MCF 10A (cell line): ENCODE measurements at regions of chr13 and their contacts with region 1.

Region 1: GRCh38 chr13:25001476-25002206 is 94.3 kb upstream of the PABPC3 start:
- DNase-seq: peak; percentile 53
- H3K4me3 Mint-ChIP-seq: no peak overlapping the region
- H3K27ac Mint-ChIP-seq: peak overlapping the region; percentile 66
- H3K4me1 Mint-ChIP-seq: peaks cover 19% of the 10 kb centered on the region
- H3K27me3 Mint-ChIP-seq: no peaks in the 10 kb centered on the region
- CTCF ChIP-seq: no peak

Region 2: DNA sequence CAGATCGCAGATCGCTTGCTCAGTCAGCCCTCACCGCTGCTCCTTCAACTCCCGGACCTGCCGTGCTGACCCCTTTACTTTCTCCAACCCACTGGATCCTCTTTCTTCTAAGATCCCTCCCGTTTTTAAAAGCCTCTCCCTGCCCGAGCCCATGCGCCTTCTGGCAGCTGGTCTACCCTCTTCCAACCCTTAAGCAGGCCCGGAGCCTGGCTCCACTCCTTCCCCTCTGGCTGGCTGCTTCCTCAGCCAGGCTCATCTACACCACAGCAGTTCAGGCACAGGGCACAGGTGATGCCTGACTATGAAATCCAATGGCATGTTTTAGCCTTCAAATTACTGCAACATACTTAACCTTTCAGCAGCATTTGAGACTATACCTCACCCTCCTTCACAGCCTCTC is 30.5 kb after region 1 on chr13:
- CTCF ChIA-PET with region 1: interaction called, 18 read pairs
- POLR2A ChIA-PET with region 1: no interaction called
- intact Hi-C with region 1: loop called (anchors 1 kb)
- DNase-seq: no peak
- H3K4me3 Mint-ChIP-seq: no peak overlapping the region
- H3K27ac Mint-ChIP-seq: no peak overlapping the region
- H3K4me1 Mint-ChIP-seq: peaks cover 3% of the 10 kb centered on the region
- H3K27me3 Mint-ChIP-seq: peaks cover 8% of the 10 kb centered on the region
- CTCF ChIP-seq: no peak

Region 3: DNA sequence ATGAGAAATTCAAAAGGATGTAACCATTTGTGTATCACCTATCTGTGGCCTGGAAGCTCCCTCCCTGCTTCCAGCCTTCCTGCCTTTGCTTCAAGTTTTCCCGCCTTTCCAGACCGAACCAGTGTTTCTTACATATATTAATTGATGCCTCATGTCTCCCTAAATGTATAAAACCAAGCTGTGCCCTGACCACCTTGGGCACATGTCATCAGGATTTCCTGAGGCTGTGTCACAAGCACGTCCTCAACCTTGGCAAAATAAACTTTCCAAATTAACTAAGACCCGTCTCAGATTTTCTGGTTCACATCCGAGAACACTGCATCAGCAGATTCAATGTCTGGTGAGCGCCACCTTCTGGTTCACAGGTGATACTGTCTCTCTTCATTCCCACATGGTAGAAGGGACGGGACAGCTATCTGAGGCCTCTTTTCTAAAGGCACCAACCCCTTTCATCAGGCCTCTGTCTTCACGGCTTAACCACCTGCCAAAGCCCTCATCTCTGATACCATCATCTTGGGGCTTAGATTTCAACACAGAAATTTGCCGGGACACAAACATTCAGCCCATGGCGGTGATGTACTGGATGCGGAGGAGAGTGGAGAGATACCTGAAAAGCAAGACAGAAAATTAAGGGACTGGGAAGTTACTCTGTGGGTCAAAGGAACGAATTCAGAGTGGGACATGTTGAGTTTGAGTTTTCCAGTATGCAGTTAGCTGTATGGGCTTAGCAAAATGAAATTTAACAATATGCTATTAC is 35.6 kb after region 1 on chr13:
- CTCF ChIA-PET with region 1: interaction called, 18 read pairs
- POLR2A ChIA-PET with region 1: no interaction called
- intact Hi-C with region 1: loop called (anchors 1 kb)
- DNase-seq: peak; percentile 79
- H3K4me3 Mint-ChIP-seq: no peak overlapping the region
- H3K27ac Mint-ChIP-seq: peak overlapping the region; percentile 16
- H3K4me1 Mint-ChIP-seq: peaks cover 5% of the 10 kb centered on the region
- H3K27me3 Mint-ChIP-seq: peaks cover 32% of the 10 kb centered on the region
- CTCF ChIP-seq: peak; percentile 72